ENCODE measurements at regions of chr12 and their contacts with region 1.

Region 1: DNA sequence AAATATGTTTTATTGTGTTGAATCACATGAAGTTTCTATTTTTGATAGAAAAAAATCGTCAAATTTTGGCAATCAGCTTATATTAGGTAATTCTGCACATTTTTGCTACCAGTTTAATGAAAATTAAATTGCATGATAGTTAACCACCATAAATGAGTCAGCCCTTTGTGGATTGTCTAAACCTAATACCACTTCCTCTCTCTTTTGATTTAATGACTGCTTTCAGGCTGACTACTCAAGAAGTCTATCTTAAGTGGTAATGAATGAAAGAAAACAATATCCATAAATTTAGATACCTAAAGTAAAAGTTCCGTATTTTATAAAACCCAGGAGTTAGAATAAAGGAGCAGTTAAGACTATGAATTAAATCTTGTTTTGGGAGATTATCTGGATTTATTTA is 450.5 kb downstream of the TMEM117 start:
- DNase-seq: no peak
- H3K4me3 ChIP-seq: no peak overlapping the region
- H3K27ac ChIP-seq: no peak overlapping the region
- H3K4me1 ChIP-seq: no peaks in the 10 kb centered on the region
- H3K27me3 ChIP-seq: no peaks in the 10 kb centered on the region
- CTCF ChIP-seq: no peak
- POLR2A ChIP-seq: no peak

Region 2: DNA sequence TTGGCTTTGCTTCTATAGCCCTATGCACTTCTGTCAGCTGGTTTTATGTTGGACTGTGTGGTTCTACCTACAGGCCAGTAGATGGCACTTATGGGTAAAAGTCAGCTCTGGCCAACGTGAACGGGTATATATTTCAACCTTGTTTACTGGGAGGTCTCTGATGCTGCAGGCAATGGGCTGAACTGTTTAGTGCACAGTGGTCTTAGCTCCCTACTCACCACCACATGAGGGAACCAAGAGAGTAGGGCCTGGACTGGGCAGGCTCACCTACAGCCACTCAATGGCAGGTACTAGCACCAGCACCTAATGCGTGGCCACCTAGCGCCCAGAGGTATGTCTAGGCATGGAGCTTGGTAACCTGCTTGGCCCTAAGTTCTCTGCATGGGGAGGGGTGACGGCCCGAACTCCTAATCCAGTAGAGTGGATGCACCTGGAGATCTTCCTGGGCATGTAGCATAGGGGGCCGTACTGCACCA is 31.4 kb after region 1 on chr12:
- intact Hi-C with region 1: no loop called
- DNase-seq: no peak
- H3K4me3 ChIP-seq: no peak overlapping the region
- H3K27ac ChIP-seq: no peak overlapping the region
- H3K4me1 ChIP-seq: no peaks in the 10 kb centered on the region
- H3K27me3 ChIP-seq: no peaks in the 10 kb centered on the region
- CTCF ChIP-seq: no peak
- POLR2A ChIP-seq: no peak

Region 3: DNA sequence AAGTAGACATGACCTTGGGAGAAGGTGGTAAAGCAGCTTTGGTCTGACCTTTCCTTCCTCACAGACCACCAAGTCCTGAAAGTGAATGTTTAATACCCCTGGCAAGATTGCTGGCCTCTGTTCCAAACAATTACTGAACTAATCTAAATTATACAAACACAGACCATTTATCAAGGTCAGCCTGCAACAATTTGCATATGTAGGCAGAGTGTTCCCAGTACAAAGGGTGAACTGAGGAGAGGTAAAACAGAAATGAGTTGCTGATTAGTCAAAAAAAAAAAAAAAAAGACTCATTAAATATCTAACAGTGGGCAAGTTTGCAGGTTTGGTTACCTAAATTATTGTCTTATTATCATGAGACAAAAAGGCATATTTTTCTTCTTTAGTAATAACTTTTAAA is 56.0 kb after region 1 on chr12:
- intact Hi-C with region 1: loop called (anchors 2 kb)
- DNase-seq: no peak
- H3K4me3 ChIP-seq: no peak overlapping the region
- H3K27ac ChIP-seq: no peak overlapping the region
- H3K4me1 ChIP-seq: no peaks in the 10 kb centered on the region
- H3K27me3 ChIP-seq: no peaks in the 10 kb centered on the region
- CTCF ChIP-seq: no peak
- POLR2A ChIP-seq: no peak

Measured in breast epithelium (tissue), 4 donors.